Left ventricle myocardium superior (tissue), 1 donor: ENCODE measurements at regions of chr20 and their contacts with region 1.

Region 1: GRCh38 chr20:36541227-36541763 is at the start of gene MYL9:
- DNase-seq: peak; percentile 98
- ATAC-seq: peak; percentile 88
- total RNA-seq, gene MYL9: 1,967 TPM

Region 2: DNA sequence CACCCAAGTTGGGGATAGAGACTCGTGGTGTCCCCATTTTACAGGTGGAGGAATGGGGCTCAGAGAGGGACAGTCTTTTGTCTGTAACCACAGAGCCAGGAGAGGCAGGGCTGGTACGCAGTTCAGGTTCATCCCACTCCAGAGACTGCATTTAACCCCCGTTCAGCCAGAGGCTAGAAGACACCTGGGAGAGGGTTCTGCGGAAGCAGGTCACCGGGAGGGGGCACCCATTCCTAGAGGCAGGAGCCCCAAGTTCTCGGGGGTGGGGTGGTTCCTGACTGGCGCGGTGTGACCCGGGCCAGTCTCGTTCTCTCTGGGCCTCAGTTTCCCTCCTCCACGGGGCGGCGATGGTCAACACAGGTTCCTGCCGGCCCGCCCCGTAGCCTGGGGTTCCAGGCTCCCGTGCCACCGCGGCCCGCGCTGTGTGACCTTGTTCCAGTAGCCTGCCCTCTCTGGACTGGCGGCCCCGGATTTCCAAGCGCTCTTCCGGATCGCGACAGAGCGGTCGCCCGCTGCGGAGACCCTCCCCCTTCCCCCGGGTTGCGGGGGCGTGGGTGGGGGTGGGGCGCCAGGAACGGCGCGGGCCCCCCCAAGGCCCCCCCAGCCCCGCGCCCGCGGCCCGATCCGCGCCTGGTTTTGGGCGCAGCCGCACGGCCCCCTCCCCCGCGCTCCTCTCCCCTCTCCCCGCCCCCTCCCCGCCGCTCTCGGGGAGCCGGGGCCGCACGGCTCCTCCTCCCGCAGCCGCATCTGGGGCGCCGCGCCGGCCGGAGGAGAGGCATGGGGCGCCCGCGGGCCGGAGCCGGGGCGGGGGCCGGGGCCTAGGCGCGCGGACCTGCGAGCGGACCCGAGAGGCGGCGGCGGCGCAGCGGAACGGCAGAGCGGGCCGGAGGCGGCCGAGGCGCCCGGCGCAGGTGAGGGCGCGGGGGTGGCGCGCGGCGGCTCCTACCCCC is 235.4 kb before region 1 on chr20 and contains the start of gene DLGAP4:
- intact Hi-C with region 1: no loop called
- DNase-seq: no peak
- ATAC-seq: no peak
- total RNA-seq, gene DLGAP4: 38.1 TPM

Region 3: DNA sequence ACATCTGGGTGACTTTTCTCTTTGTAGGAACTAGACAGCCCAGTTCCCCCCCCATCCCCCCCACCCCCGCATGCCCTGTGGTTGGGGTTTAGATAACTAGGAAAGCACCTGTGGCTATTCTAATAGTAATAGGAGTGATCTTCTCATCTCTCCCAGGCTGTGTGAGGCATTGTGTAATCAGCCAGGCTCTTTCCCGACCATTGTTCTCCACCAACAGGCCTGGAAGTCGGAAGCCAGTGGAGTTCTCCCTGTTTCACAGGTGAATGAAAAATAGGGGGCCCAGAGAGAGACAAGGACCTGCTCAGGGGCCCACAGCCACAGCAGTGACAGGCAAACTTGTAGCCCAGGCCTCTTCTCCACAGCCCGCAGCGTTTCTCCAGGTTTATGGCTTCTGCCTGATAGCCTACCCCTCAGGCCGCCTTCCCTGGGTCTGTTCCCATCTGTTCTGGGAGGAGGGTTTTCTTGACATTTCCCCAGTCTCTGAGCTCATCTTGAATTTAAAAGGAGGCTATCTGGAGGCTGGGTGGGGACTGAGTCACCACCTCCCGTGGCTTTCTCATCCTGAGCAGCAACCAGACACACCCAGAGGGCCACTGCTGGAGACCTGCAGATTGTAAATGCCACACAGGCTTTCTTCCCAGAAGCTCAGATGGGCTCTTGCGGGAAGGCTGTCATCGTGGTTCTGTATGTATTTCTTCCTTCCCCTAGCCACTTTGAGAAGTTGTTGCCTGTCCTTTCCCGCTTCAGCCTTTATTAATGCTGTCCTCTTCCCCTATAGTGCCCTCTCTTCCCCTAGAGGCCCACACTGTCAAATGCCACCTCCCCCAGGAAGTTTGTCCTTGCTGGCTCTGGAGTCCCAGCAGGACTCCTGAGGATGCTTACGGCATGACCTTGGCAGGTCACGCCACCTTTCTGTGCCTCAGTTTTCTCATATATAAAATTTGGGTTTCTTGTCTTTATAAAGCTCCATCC is 75.9 kb before region 1 on chr20:
- intact Hi-C with region 1: loop called (anchors 5 kb)
- DNase-seq: peak; percentile 57
- ATAC-seq: peak; percentile 0